PC-9 (cell line): ENCODE measurements at regions of chr3 and their contacts with region 1.

Region 1: DNA sequence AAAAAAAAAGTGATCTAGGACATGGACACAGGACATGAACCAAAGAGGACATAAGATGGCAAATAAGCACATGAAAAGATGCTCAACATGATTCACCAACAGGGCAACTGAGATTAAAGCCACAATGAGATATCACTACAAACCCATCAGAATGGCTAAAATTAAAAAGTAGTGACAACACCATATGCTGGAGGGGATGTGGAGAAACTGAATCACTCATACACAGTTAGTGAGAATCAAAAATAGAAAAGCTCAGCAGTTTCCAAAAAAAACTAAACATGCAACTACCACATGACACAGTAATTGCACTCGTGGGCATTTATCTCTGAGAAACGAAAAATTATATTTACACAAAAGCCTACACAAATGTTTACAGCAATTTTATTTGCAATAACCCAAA is 27.9 kb upstream of the ACKR4 start:
- DNase-seq: no peak
- H3K4me3 ChIP-seq: no peak overlapping the region
- H3K27ac ChIP-seq: no peak overlapping the region
- H3K4me1 ChIP-seq: no peaks in the 10 kb centered on the region
- H3K27me3 ChIP-seq: no peaks in the 10 kb centered on the region
- CTCF ChIP-seq: no peak

Region 2: DNA sequence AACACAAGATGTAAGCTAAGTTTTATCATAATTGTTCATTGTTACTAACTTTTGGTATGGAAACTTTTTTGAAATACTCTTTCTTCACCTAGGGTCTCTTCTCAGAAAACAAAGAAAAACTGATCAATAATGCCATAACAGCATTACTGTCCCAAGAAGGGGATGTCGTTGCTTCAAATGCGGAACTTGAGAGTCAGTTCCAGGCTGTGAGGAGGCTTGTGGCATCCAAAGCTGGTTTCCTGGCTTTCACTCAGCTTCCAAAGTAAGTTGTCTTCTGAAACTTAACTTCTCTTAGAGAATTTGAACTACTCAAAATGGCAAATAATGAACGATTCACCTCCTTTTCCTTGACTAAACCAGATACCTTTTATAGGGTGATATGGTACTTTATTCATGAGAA is 112.6 kb before region 1 on chr3:
- CTCF ChIA-PET with region 1: no interaction called
- POLR2A ChIA-PET with region 1: interaction called, 10 read pairs
- intact Hi-C with region 1: no loop called
- DNase-seq: no peak
- H3K4me3 ChIP-seq: no peak overlapping the region
- H3K27ac ChIP-seq: no peak overlapping the region
- H3K4me1 ChIP-seq: no peaks in the 10 kb centered on the region
- H3K27me3 ChIP-seq: no peaks in the 10 kb centered on the region
- CTCF ChIP-seq: no peak